Activated CD4-positive, alpha-beta memory T cell treated with anti-CD3 and anti-CD28 coated beads, Interleukin-2, amount 10 ng/mL, durations not matched to agents 7 days and 5 days (primary cell): ENCODE measurements at regions of chr12 and their contacts with region 1.

Region 1: GRCh38 chr12:121668750-121669520 is 519 bp downstream of the MORN3 start:
- DNase-seq: peak; percentile 57
- H3K4me3 Mint-ChIP-seq: no peak overlapping the region
- H3K27ac Mint-ChIP-seq: no peak overlapping the region
- H3K4me1 Mint-ChIP-seq: peaks cover 65% of the 10 kb centered on the region
- H3K27me3 Mint-ChIP-seq: no peaks in the 10 kb centered on the region

Region 2: DNA sequence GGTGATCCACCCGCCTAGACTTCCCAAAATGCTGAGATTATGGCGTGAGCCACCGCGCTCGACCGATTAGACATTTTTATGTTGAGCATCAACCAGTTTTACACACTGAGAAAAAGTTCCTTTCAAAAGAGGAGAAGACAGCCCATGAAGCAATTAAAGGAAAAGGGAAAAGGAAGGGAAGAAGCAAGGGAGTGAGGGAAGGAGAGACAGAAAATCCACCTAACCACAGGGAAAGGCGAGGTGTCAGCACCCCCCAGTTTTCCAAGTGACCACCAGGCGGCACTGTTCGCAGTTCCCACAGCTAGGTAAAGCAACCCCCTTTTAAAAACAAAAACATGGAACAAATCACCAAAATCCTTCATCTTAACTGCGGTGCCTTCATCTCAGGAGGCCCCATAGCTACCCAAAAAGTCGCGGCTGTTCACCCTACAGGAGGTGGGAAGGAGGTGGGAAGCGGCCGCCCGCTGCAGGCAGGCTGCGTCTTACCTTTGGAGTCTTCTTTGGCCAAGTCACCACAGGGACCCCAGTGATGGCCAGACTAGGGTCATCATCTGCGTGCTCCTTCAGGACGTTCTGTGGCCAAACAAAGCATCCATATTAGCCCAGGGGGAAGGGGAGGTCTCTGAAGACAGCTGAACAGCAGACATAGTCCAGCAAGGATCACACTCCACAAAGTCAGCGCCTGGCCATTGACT is 174.7 kb before region 1 on chr12:
- CTCF ChIA-PET with region 1: interaction called, 11 read pairs
- POLR2A ChIA-PET with region 1: no interaction called
- DNase-seq: peak; percentile 66
- H3K4me3 Mint-ChIP-seq: no peak overlapping the region
- H3K27ac Mint-ChIP-seq: no peak overlapping the region
- H3K4me1 Mint-ChIP-seq: peaks cover 12% of the 10 kb centered on the region
- H3K27me3 Mint-ChIP-seq: no peaks in the 10 kb centered on the region

Region 3: DNA sequence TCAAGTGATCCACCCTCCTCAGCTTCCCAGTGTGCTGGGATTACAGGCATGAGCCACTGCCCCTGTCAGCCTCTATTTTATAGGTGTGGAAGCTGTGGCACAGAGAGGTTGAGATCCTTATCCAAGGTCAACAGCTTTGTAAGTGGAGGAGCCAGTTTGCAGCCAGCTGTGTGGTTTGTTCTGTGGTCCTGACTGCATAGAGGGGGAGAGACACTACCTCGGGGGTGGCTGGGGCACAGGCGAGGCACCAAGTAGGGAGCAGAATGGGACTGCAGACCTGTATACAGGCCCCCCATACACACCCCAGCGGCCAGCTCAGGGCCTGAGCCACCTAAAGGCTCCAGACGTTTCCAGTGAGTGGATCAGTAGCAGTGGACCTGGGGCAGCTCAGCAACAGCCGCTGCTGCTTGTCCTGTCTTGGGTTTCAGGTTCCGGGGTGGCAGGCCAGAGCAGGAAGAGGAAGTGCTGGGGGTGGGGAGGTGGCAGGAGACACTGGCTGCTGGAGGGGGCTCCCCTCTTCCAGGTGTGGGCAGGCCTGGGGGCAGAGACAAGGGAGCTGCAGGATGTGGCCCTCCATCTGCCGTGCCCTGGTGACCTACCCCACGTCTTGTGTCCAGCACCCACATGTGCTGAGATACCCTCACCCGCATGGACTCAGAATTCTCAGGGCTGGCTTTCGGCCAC is 31.6 kb before region 1 on chr12:
- CTCF ChIA-PET with region 1: interaction called, 30 read pairs
- POLR2A ChIA-PET with region 1: interaction called, 24 read pairs
- DNase-seq: peak; percentile 74
- H3K4me3 Mint-ChIP-seq: peak overlapping the region; percentile 59
- H3K27ac Mint-ChIP-seq: peak overlapping the region; percentile 93
- H3K4me1 Mint-ChIP-seq: peaks cover 51% of the 10 kb centered on the region
- H3K27me3 Mint-ChIP-seq: no peaks in the 10 kb centered on the region

Region 4: GRCh38 chr12:121657305-121658008 is 11.5 kb before region 1 on chr12:
- CTCF ChIA-PET with region 1: interaction called, 14 read pairs
- POLR2A ChIA-PET with region 1: interaction called, 33 read pairs
- DNase-seq: peak; percentile 55
- H3K4me3 Mint-ChIP-seq: peak overlapping the region; percentile 5
- H3K27ac Mint-ChIP-seq: peak overlapping the region; percentile 98
- H3K4me1 Mint-ChIP-seq: peaks cover 76% of the 10 kb centered on the region
- H3K27me3 Mint-ChIP-seq: no peaks in the 10 kb centered on the region

Region 5: DNA sequence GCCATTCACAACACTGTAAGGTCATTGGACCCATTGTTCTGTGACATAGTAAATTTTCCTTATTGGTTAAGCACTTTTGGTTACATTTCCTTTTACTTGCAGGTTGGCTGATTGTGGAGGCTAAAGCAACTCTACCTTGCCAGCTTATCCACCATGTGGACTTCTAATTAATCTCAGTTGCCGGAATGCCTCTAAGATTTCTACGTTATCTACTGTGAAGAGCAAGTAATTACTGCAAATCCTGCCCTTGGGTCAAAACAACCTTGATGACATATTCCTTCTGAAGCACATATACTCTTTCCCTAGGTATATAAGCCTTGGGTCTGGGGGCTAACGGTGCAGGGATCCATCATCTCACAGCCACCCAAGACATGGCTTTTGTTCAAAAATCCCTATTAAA is 20.0 kb after region 1 on chr12:
- CTCF ChIA-PET with region 1: interaction called, 11 read pairs
- POLR2A ChIA-PET with region 1: interaction called, 13 read pairs
- DNase-seq: no peak
- H3K4me3 Mint-ChIP-seq: no peak overlapping the region
- H3K27ac Mint-ChIP-seq: no peak overlapping the region
- H3K4me1 Mint-ChIP-seq: peaks cover 15% of the 10 kb centered on the region
- H3K27me3 Mint-ChIP-seq: peaks cover 2% of the 10 kb centered on the region

Region 6: GRCh38 chr12:121829250-121829918 is 160.4 kb after region 1 on chr12:
- CTCF ChIA-PET with region 1: no interaction called
- POLR2A ChIA-PET with region 1: no interaction called
- DNase-seq: no peak
- H3K4me3 Mint-ChIP-seq: no peak overlapping the region
- H3K27ac Mint-ChIP-seq: no peak overlapping the region
- H3K4me1 Mint-ChIP-seq: no peaks in the 10 kb centered on the region
- H3K27me3 Mint-ChIP-seq: no peaks in the 10 kb centered on the region